Thyroid gland (tissue), 4 donors: ENCODE measurements at regions of chr2 and their contacts with region 1.

Region 1: DNA sequence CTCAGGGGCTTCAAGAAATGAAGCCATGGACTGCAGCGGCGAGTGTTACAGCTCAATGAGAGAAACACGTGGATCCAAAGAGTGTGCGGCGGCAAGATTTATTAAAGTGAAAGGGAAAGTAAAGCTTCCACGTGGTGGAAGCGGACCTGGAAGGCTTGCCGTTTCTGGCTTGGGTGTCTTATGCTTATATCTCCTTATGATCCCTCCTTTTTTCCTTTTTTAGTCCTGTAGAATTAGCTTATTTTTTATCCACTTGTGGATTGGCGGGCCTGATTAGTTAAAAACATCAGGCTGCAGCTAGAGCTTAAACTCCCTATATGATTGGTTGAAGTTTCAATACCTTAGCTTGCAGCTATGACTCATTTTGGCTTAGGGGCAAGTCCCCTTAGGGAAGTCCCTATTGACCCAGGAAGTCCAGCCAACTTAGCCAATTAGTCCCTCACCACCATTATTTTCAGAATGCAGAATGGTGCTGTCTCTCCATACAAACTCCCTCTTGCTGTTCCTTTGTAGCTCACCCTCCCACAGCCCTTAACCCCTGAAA is 11.6 kb upstream of the HNMT start:
- DNase-seq: no peak
- H3K4me3 ChIP-seq: no peak overlapping the region
- H3K27ac ChIP-seq: no peak overlapping the region
- H3K4me1 ChIP-seq: no peaks in the 10 kb centered on the region
- H3K27me3 ChIP-seq: no peaks in the 10 kb centered on the region
- CTCF ChIP-seq: no peak
- POLR2A ChIP-seq: no peak

Region 2: GRCh38 chr2:138071720-138072719 is 119.4 kb after region 1 on chr2:
- intact Hi-C with region 1: loop called (anchors 5 kb)
- DNase-seq: no peak
- H3K4me3 ChIP-seq: no peak overlapping the region
- H3K27ac ChIP-seq: no peak overlapping the region
- H3K4me1 ChIP-seq: no peaks in the 10 kb centered on the region
- H3K27me3 ChIP-seq: no peaks in the 10 kb centered on the region
- CTCF ChIP-seq: no peak
- POLR2A ChIP-seq: no peak